ENCODE measurements at regions of chr9 and their contacts with region 1.

Region 1: DNA sequence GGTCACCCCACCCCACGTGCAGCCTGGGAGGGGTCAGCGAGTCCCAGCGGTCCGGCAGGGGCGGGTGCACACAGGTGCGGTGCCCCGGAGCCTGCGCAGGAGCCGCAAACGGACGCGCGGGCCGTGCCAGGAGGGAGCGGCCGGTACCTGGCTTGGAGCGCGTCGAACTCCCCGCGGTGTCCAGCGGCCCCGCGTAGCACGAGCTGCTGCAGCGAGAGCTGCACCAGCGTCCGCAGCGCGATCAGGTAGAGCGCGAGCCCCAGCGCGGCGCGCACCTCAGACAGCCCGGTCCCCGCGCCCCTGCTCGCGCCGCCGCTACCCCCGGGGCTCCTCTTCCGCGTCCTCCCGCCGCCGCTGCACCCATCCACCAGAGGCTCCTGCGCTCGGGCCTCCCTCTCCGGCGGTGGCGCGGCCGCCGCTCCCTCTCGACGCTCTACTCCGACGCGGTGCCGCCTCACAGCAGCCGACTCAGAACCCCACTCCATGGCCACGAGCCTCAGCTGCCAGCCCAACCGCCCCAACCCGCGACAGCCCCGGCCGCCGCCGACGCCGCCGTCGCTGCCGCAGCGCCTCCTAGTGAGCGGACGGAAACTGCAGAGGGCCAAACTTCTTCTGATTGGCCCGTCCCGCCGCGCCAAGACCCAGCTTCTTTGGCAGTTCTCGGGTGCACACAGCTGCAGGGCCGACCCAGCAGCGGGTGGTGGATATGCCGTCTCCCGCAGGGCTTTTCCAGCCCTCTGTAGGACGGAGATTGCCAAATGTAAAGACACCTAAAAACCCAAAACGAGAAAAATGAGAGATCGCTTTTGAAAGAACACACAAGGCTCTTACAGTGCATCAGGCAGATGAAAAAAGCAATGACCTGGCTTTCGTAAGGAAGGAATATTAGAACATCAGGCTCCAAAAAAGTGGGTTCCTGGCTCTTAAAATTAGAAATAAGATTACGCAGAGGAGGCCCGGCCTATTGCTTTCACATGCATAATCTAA is at the start of gene ERMP1:
- DNase-seq: peak; percentile 71
- ATAC-seq: peak; percentile 85
- H3K4me3 ChIP-seq: peak within 1 kb of the TSS; percentile 70 to 87 (median 73)
- H3K27ac ChIP-seq: peak within 1 kb of the TSS; percentile 90
- H3K4me1 ChIP-seq: peaks cover 66% of the 10 kb centered on the region
- H3K27me3 ChIP-seq: no peaks in the 10 kb centered on the region
- CTCF ChIP-seq: peak; percentile 94
- EP300 ChIP-seq: no peak
- POLR2A ChIP-seq: peak; percentile 74 to 77
- RAD21 ChIP-seq: peak; percentile 79
- total RNA-seq, gene ERMP1: 28.1 and 40.9 TPM in 2 replicates

Region 2: DNA sequence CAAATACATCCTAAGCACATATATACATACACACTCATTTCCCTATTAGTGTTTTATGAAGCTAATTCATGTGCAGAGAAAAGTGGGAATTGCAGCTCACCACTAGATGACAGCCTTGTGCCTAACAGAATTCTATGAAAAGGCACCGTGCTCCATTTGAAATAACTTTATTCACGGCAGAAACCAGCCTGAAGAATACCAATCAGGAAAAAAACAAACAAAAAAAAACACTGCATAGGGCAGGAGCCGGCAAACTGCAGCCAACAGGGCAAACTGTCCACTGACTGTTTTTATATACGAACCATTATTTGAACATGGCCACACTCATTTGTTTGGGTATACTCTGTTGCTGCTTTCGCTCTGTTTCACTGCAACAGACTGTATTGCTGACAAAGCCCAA is 33.5 kb before region 1 on chr9:
- CTCF ChIA-PET with region 1: no interaction called
- POLR2A ChIA-PET with region 1: no interaction called
- in situ Hi-C with region 1: no loop called
- intact Hi-C with region 1: loop called (anchors 2 kb)
- DNase-seq: peak; percentile 28
- ATAC-seq: peak; percentile 59
- H3K4me3 ChIP-seq: no peak overlapping the region
- H3K27ac ChIP-seq: no peak overlapping the region
- H3K4me1 ChIP-seq: no peaks in the 10 kb centered on the region
- H3K27me3 ChIP-seq: no peaks in the 10 kb centered on the region
- CTCF ChIP-seq: peak; percentile 62
- EP300 ChIP-seq: no peak
- POLR2A ChIP-seq: no peak
- RAD21 ChIP-seq: peak; percentile 42; the same call in 1 of the 2 replicates

Region 3: DNA sequence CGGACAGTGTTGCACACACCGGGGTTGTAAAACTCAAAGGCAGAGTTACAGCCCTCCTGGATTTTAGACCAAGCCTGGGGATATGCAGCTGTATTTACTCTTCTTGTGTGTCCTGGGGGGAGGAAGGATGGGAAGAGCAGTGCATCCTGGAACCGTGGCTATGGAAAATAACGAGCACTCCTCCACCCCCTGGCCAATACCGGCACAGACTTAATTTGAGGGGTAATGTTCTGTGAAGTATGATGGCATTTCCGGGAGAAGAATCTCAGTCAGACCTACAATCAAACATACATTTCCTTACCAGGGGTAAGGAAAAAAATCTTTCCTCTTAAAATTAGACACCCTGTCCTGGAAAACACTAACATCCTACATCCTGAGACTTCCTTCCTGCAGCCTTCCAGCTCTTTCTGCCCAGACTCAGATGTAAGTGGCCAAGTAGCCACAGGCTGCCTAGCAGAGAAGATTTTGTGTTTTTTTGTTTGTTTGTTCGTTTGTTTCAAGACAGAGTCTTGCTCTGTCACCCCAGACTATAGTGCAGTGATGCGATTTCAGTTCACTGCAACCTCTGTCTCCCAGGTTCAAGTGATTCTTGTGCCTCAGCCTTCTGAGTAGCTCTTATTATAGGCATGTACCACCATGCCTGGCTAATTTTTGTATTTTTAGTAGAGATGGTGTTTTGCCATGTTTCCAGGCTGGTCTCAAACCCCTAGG is 11.1 kb after region 1 on chr9:
- CTCF ChIA-PET with region 1: no interaction called
- POLR2A ChIA-PET with region 1: interaction called, 15 read pairs
- in situ Hi-C with region 1: no loop called
- intact Hi-C with region 1: no loop called
- DNase-seq: peak; percentile 88
- ATAC-seq: peak; percentile 89
- H3K4me3 ChIP-seq: peak overlapping the region; percentile 34 to 49 (median 34)
- H3K27ac ChIP-seq: peak overlapping the region; percentile 70
- H3K4me1 ChIP-seq: peaks cover 58% of the 10 kb centered on the region
- H3K27me3 ChIP-seq: no peaks in the 10 kb centered on the region
- CTCF ChIP-seq: peak; percentile 34; the same call in 1 of the 2 replicates
- EP300 ChIP-seq: peak in 1 of 2 experiments; percentile 70; a peak in 1 of 4 replicates
- POLR2A ChIP-seq: peak in 1 of 2 experiments; percentile 36; a peak in 1 of 4 replicates
- RAD21 ChIP-seq: no peak

Measured in HepG2 (cell line).